Mammary epithelial cell (primary cell): ENCODE measurements at regions of chr6 and their contacts with region 1.

Region 1: GRCh38 chr6:34986845-34987246 is 97.8 kb downstream of the ANKS1A start:
- DNase-seq: peak; percentile 53
- H3K4me3 ChIP-seq: no peak overlapping the region
- H3K27ac ChIP-seq: no peak overlapping the region
- H3K4me1 ChIP-seq: no peaks in the 10 kb centered on the region
- H3K27me3 ChIP-seq: no peaks in the 10 kb centered on the region
- CTCF ChIP-seq: peak; percentile 72 to 77

Region 2: DNA sequence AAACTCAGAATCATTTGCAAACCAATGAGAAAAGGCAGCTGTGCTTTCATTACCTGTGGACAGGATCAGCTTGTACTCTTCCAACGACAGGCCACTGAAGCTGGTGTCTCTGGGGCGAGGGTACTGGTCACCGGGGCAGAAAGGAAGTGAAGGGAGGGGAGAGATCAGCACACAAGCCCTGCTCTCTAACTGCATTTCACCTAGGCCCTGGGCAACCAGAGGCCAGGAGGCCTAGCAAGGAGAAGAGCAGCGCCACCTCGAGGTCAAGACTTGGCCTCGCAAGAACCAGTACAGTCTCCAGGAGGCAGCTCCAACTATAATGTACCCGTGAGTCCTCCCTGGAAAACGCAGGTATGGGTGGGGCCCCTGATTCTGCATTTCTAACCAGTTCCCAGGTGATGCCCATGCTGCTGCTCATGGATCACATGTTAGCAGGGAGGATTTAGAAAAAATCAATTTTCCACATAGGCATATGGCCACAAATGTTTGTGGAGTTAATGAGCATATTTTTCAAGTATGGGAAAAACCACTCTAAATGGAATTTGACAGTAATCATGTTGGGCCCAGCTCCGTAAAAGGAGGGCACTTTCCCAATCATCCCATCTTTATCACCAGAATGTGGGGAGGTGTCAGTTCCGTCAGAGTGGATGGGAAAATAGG is 1286.3 kb before region 1 on chr6:
- CTCF ChIA-PET with region 1: no interaction called
- dilution Hi-C with region 1: no loop called
- in situ Hi-C with region 1: no loop called
- intact Hi-C with region 1: no loop called
- DNase-seq: peak; percentile 74
- H3K4me3 ChIP-seq: no peak overlapping the region
- H3K27ac ChIP-seq: no peak overlapping the region
- H3K4me1 ChIP-seq: peaks cover 26% of the 10 kb centered on the region
- H3K27me3 ChIP-seq: no peaks in the 10 kb centered on the region
- CTCF ChIP-seq: peak; percentile 74 to 90

Region 3: DNA sequence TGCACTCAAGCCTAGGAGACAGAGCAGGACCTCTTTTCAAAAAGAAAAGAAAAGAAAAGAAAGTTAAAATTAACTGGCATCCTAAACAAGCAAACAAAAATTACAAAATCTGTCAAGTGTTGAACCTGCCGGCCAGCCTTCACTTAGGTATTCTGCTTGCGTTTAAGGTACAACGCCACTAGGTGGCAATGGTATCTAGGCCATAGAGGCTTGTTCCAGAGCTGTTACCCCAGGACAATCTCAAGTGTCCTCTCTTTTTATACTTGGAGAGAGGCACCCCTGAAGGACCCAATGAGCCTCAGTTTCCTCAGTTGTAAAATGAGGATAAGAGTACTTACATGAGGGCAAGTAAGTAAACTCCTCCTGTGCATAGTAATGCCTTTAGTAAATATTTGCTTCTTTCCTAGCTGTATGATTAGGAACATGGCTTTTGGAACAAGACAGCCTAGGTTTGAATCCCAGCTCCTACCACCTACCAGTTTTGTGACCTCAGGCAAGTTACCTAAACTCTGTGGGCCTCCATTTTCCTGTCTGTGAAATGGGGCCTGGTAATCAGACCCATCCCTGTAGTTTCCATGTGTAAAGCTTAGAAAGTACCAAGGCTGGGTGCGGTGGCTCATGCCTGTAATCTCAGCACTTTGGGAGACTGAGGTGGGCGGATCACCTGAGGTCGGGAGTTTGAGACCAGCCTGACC is 526.8 kb before region 1 on chr6:
- CTCF ChIA-PET with region 1: no interaction called
- dilution Hi-C with region 1: no loop called
- in situ Hi-C with region 1: no loop called
- intact Hi-C with region 1: loop called (anchors 5 kb)
- DNase-seq: peak; percentile 49
- H3K4me3 ChIP-seq: no peak overlapping the region
- H3K27ac ChIP-seq: no peak overlapping the region
- H3K4me1 ChIP-seq: peaks cover 6% of the 10 kb centered on the region
- H3K27me3 ChIP-seq: no peaks in the 10 kb centered on the region
- CTCF ChIP-seq: peak; percentile 69 to 84

Region 4: DNA sequence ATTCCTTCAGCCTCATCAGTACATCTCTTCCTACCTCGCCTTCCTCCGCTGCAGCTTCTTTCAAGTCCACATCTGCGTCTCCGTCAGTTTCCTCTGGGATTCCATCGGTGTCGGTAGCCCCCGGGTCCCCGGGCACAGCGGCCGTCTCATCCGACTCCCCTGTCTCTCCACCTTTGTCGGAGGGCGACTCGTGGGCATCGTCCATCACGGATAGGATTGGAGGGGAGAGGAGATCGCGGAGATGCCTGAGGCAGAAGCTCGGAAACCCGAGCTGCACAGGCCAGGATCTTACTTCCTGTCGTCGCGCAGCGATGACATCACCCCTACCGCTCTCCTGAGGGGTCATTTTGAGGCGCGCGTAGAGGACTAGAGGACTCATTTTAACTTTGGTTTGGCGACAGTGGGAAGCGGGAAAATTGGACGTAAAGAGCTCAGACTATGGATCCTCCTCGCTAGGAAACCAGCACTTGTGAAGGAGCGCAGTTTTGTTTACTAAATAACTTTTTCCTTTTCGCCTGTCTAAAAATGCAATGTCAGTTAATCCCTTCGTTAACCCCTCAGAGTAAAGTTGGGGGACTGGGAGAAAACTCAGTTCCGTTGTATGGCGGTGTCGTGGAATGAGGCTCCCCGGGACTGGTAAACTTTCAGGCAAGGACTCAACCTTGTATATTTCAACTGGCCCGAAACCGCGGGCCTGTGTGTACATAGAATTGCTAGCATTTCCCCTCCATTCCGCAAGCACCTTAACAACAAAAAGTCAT is 98.9 kb before region 1 on chr6 and contains the start of gene TAF11:
- CTCF ChIA-PET with region 1: no interaction called
- dilution Hi-C with region 1: no loop called
- in situ Hi-C with region 1: no loop called
- intact Hi-C with region 1: loop called (anchors 5 kb)
- DNase-seq: peak; percentile 92
- H3K4me3 ChIP-seq: peak within 1 kb of the TSS; percentile 61 to 98 (median 78)
- H3K27ac ChIP-seq: peak within 1 kb of the TSS; percentile 89
- H3K4me1 ChIP-seq: peaks cover 14% of the 10 kb centered on the region
- H3K27me3 ChIP-seq: no peaks in the 10 kb centered on the region
- CTCF ChIP-seq: no peak
- total RNA-seq, gene TAF11: 11.0 to 16.4 TPM

Region 5: GRCh38 chr6:35048631-35049083 is 61.8 kb after region 1 on chr6:
- CTCF ChIA-PET with region 1: no interaction called
- dilution Hi-C with region 1: no loop called
- in situ Hi-C with region 1: loop called in 1 of 2 experiments (anchors 5 kb)
- intact Hi-C with region 1: no loop called
- DNase-seq: no peak
- H3K4me3 ChIP-seq: no peak overlapping the region
- H3K27ac ChIP-seq: no peak overlapping the region
- H3K4me1 ChIP-seq: peaks cover 39% of the 10 kb centered on the region
- H3K27me3 ChIP-seq: no peaks in the 10 kb centered on the region
- CTCF ChIP-seq: no peak

Region 6: GRCh38 chr6:35128496-35128895 is 141.7 kb after region 1 on chr6:
- CTCF ChIA-PET with region 1: no interaction called
- dilution Hi-C with region 1: loop called (anchors 10 kb)
- in situ Hi-C with region 1: loop called in 1 of 2 experiments (anchors 5 kb)
- intact Hi-C with region 1: no loop called
- DNase-seq: no peak
- H3K4me3 ChIP-seq: no peak overlapping the region
- H3K27ac ChIP-seq: no peak overlapping the region
- H3K4me1 ChIP-seq: no peaks in the 10 kb centered on the region
- H3K27me3 ChIP-seq: no peaks in the 10 kb centered on the region
- CTCF ChIP-seq: no peak

Region 7: DNA sequence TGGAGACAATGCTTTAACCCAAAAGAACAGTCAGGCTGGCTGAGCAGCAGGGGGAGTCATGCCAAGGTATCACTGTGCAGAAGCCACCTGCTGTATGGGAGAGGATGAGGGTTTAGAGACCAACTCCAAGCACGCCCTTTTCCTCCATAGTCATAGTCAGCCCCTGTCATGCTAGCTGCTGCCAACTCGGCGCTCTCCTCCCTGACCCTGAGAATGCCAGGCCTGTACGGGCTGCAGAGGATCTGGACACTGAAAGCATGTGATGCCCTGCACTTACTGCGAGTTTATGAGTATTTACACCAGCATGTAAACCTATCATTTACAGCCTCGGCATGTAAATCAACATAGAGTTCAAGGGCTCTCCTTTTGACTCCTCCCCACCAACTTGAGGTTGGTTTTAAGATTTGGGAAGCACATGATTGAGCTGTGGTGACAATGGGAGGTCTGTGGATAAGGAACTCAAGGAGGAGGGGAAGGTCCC is 215.3 kb after region 1 on chr6:
- CTCF ChIA-PET with region 1: no interaction called
- dilution Hi-C with region 1: no loop called
- in situ Hi-C with region 1: no loop called
- intact Hi-C with region 1: loop called (anchors 1 kb)
- DNase-seq: no peak
- H3K4me3 ChIP-seq: no peak overlapping the region
- H3K27ac ChIP-seq: no peak overlapping the region
- H3K4me1 ChIP-seq: peaks cover 5% of the 10 kb centered on the region
- H3K27me3 ChIP-seq: no peaks in the 10 kb centered on the region
- CTCF ChIP-seq: no peak

Region 8: GRCh38 chr6:35240840-35241801 is 254.3 kb after region 1 on chr6:
- CTCF ChIA-PET with region 1: interaction called, 4 read pairs
- dilution Hi-C with region 1: no loop called
- in situ Hi-C with region 1: loop called in 1 of 2 experiments (anchors 10 kb)
- intact Hi-C with region 1: loop called (anchors 1 kb)
- DNase-seq: peak; percentile 62
- H3K4me3 ChIP-seq: no peak overlapping the region
- H3K27ac ChIP-seq: no peak overlapping the region
- H3K4me1 ChIP-seq: no peaks in the 10 kb centered on the region
- H3K27me3 ChIP-seq: no peaks in the 10 kb centered on the region
- CTCF ChIP-seq: peak; percentile 96 to 98